GM10248 (cell line): ENCODE measurements at regions of chr2 and their contacts with region 1.

Region 1: GRCh38 chr2:102442967-102443828 is 20.2 kb downstream of the IL18RAP start:
- DNase-seq: peak; percentile 41
- CTCF ChIP-seq: peak; percentile 71

Region 2: DNA sequence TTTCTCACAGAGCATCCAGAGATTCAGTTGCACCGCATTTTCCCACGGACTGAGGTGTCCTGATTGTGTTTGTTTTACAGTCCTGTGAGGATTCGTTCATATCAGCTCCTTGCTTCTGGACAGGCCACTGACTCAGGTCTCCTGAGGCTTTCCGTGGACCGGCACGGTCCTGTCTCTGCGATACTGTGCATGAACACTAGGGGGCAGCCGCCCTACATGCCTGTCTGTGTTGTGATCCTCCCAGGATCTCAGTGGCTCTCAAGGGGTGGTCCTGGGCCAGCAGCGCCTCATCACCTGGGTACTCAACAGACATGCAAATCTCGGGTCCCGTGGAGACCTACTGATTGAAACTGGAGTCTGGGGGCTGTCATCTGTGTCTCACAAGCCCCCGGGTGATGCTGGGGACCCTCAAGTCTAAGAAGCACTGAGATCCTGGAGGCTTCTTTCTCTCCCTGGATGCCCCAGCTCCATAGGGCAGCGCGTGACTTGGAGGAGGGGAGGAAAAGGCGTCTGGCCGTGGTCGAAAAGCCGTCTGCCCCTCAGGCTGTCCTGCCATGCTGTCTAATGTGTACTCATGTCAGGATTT is 422.5 kb before region 1 on chr2:
- CTCF ChIA-PET with region 1: interaction called, 12 read pairs
- POLR2A ChIA-PET with region 1: no interaction called
- DNase-seq: peak; percentile 72
- CTCF ChIP-seq: peak; percentile 99

Region 3: DNA sequence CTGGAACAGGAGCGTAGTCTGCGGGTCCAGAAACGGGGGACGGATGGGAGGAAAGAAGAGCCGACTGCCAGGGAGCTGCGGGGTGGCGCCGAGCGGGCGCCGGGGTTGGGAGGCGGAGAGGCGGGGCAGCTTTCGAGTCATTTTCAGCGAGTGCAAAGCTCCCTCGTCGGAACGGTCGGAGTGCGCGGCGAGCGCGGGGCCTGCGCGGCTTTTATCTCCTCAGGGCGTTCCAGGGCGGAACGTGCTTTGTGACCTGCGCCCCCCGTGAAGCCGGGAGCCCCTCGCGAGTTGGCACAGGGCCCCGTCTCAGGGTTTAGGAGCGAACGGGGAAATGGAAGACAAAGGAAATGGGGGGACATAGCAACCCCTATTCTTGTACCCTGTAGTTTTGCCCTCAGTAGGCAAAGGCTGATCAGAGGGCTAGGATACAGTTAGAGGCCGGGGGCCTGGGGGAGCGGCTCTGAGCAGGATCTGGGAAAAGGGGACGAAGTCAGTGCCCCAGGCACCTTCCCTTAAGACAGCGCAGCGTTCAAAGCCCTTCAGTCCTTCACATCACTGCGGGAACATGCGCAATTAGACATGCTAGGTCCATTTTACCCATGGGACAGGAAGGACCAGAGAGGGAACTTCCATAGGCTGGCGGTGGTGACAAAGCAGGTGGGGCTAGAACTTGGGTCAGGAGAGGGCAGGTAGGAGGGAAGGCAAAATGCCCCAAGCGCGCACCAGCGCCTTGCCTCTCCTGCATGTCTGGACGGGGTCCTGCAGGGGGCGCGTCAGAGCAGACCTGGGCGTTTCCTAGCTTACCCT is 192.0 kb before region 1 on chr2:
- CTCF ChIA-PET with region 1: interaction called, 49 read pairs
- POLR2A ChIA-PET with region 1: no interaction called
- DNase-seq: peak; percentile 72
- CTCF ChIP-seq: peak; percentile 75

Region 4: DNA sequence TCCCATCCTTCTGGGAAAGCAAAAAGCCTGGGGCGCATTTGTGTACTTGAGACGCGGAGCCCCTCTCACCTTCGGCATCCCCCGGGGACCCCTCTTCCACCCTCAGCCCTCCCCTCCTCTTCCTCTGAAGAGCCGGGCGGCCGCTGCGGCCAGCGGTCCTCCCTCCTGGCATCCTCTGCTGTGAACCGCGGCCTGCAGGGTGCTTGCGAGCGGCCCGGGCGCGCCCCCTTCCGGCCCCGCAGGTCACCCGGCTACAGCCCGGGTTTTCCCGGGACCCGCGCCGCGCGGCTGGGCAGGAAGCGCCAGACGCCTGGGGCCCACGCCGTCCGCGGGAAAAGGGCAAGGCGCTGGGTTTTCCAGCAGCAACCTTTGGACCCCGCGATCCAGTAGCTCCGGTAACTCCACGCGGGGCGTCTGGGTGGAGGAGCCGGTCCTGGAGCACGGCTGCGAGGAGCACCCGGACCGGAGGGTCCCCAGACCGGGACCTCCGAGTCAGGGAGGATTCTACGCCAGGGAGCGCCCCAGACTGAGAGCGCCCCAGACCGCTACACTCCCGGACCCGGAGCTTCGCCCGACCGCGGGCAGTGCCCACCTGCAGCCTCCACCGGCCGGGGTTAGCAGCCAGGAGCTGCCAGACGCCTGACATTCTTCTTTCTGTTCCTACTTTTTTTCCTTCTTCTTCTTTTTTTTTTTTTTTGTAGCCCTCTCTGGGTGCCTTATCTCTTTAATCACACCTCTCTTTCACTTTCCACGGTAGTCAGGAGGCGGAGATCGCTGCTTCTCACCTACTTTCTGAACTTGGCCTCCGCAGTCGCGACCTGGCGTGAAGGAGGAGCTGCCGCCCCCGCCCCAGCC is 87.4 kb before region 1 on chr2 and contains the start of gene IL18R1:
- CTCF ChIA-PET with region 1: interaction called, 36 read pairs
- POLR2A ChIA-PET with region 1: no interaction called
- DNase-seq: peak; percentile 81
- CTCF ChIP-seq: peak; percentile 86

Region 5: DNA sequence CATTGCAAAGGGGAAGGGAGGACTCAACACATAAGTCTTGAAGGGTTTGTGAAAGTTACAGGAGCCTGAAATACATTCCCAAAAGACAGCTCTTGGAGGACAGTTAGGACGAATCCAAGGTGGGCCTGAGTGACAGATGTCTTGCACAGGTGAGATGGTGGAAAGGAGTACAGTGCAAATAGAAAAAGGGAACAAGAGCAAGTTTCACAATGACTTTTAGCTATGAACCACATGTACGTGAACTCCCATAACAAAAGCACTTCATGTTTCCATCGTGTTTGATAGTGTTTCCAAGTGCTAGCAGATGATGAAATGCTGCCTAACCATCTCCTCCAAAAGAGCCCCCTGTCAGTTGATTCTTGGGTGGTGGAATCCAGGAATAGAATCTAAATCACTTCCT is 18.4 kb before region 1 on chr2:
- CTCF ChIA-PET with region 1: interaction called, 49 read pairs
- POLR2A ChIA-PET with region 1: no interaction called
- DNase-seq: no peak
- CTCF ChIP-seq: no peak

Region 6: DNA sequence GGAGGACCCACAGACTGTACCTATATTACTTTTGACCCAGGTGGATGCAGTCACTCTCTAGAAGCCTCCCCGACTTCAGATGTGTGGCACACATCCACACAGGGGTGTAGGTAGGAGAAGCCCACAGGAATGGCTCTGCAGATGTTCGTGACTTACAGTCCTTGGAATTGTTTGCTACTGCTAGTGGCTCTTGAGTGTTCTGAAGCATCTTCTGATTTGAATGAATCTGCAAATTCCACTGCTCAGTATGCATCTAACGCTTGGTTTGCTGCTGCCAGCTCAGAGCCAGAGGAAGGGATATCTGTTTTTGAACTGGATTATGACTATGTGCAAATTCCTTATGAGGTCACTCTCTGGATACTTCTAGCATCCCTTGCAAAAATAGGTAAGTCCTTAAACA is 30.4 kb after region 1 on chr2:
- CTCF ChIA-PET with region 1: no interaction called
- POLR2A ChIA-PET with region 1: no interaction called
- DNase-seq: no peak
- CTCF ChIP-seq: no peak

Region 7: GRCh38 chr2:102551329-102552096 is 108.3 kb after region 1 on chr2:
- CTCF ChIA-PET with region 1: no interaction called
- POLR2A ChIA-PET with region 1: no interaction called
- DNase-seq: no peak
- CTCF ChIP-seq: no peak